ENCODE measurements at regions of chr5 and their contacts with region 1.

Region 1: DNA sequence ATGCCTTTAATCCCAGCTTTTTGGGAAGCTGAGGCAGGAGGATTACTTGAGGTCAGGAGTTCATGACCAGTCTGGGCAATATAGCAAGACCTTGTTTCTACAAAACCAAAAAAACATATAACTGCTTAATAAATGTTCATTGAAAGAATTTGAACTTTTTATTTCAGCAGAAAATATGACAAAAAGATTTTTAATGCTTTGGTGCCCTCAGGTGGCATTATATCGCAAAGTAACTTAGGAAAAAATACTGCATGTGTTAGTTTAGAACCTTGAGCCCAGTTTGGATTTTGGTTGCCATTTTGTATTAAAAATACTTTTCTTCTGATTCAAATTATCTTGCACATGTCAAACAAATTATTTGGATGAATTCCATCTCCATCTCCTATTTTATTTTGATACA is 103.2 kb downstream of the GPBP1 start:
- DNase-seq: no peak
- ATAC-seq: no peak
- H3K4me3 ChIP-seq: no peak overlapping the region
- H3K4me3 Mint-ChIP-seq: no peak overlapping the region
- H3K27ac ChIP-seq: no peak overlapping the region
- H3K27ac Mint-ChIP-seq: no peak overlapping the region
- H3K4me1 ChIP-seq: no peaks in the 10 kb centered on the region
- H3K4me1 Mint-ChIP-seq: no peaks in the 10 kb centered on the region
- H3K27me3 ChIP-seq: no peaks in the 10 kb centered on the region
- H3K27me3 Mint-ChIP-seq: peaks cover 5 to 19% (median 9%) of the 10 kb centered on the region in 5 donors

Region 2: DNA sequence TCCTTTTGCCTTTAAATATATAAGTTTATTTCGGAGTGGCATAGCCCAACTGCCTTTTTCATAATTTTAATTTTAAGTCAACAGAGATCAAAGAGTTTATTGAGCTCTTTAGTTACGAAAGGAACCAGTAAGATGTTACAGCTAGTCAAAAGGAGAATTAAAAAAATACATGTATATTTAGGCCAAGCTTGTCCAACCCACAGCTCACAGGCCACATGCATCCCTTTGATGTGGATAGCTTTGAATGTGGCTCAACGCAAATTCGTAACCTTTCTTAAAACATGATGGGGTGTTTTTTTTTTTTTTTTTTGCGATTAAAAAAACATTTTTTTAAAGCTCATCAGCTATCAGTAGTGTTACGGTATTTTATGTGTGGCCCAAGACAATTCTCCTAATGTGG is 1476.2 kb before region 1 on chr5:
- CTCF ChIA-PET with region 1: no interaction called
- POLR2A ChIA-PET with region 1: no interaction called
- intact Hi-C with region 1: no loop called
- DNase-seq: no peak
- ATAC-seq: no peak
- H3K4me3 ChIP-seq: no peak overlapping the region
- H3K4me3 Mint-ChIP-seq: no peak overlapping the region
- H3K27ac ChIP-seq: no peak overlapping the region
- H3K27ac Mint-ChIP-seq: no peak overlapping the region
- H3K4me1 ChIP-seq: no peaks in the 10 kb centered on the region
- H3K4me1 Mint-ChIP-seq: peaks cover 0 to 2% (median 0%) of the 10 kb centered on the region in 7 donors
- H3K27me3 ChIP-seq: no peaks in the 10 kb centered on the region
- H3K27me3 Mint-ChIP-seq: no peaks in the 10 kb centered on the region

Region 3: GRCh38 chr5:56900858-56901578 is 376.1 kb before region 1 on chr5:
- CTCF ChIA-PET with region 1: interaction called, 3 read pairs
- POLR2A ChIA-PET with region 1: no interaction called
- intact Hi-C with region 1: loop called in 1 of 2 experiments (anchors 5 kb)
- DNase-seq: peak in 7 of 9 donors; percentile 20 to 62 (median 51)
- ATAC-seq: peak; percentile 81
- H3K4me3 ChIP-seq: no peak overlapping the region
- H3K4me3 Mint-ChIP-seq: no peak overlapping the region
- H3K27ac ChIP-seq: no peak overlapping the region
- H3K27ac Mint-ChIP-seq: no peak overlapping the region
- H3K4me1 ChIP-seq: no peaks in the 10 kb centered on the region
- H3K4me1 Mint-ChIP-seq: peaks cover 0 to 6% (median 0%) of the 10 kb centered on the region in 7 donors
- H3K27me3 ChIP-seq: no peaks in the 10 kb centered on the region
- H3K27me3 Mint-ChIP-seq: peaks cover 0 to 15% (median 0%) of the 10 kb centered on the region in 5 donors

Region 4: DNA sequence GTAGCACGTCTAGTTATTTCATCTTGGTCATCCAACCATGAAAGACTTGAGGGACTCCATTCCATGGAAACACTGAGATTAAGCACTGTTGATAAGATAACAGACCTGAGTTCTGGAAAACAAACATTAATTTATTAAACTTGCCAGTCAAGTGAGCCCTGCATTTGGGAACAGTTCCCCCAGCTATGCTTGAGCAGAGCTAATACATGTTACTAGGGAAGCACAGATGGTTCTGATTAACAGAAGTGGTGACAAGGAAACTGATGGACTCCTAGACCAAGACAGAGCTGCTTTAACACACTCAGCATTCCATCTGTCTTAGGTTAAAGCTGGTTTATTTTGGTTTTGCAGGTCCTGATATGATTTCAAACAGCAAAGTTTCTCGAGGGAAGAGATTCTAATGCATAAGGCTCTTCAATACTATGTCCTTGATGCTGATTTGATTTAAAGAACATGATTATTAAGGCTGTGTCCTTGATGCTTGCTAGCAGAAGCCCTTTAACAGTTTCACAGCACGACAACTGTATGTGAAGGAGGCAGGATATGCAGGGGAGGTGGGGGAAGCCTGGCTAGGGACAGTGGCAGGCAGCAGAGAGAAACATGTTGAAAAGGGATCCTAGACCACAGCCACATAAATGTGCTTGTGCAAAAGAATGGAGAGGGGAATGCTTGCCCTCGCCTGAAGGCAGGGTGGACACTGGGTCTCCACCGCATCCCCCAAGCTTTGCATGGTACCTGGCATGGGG is 139.3 kb after region 1 on chr5:
- CTCF ChIA-PET with region 1: no interaction called
- POLR2A ChIA-PET with region 1: no interaction called
- intact Hi-C with region 1: no loop called
- DNase-seq: no peak
- ATAC-seq: no peak
- H3K4me3 ChIP-seq: no peak overlapping the region
- H3K4me3 Mint-ChIP-seq: no peak overlapping the region
- H3K27ac ChIP-seq: no peak overlapping the region
- H3K27ac Mint-ChIP-seq: peak overlapping the region in 1 of 9 donors; percentile 26
- H3K4me1 ChIP-seq: no peaks in the 10 kb centered on the region
- H3K4me1 Mint-ChIP-seq: no peaks in the 10 kb centered on the region
- H3K27me3 ChIP-seq: no peaks in the 10 kb centered on the region
- H3K27me3 Mint-ChIP-seq: peaks cover 0 to 7% (median 4%) of the 10 kb centered on the region in 5 donors

Measured in naive thymus-derived CD4-positive, alpha-beta T cell (primary cell).